AG04450 (cell line): ENCODE measurements at regions of chr3 and their contacts with region 1.

Region 1: DNA sequence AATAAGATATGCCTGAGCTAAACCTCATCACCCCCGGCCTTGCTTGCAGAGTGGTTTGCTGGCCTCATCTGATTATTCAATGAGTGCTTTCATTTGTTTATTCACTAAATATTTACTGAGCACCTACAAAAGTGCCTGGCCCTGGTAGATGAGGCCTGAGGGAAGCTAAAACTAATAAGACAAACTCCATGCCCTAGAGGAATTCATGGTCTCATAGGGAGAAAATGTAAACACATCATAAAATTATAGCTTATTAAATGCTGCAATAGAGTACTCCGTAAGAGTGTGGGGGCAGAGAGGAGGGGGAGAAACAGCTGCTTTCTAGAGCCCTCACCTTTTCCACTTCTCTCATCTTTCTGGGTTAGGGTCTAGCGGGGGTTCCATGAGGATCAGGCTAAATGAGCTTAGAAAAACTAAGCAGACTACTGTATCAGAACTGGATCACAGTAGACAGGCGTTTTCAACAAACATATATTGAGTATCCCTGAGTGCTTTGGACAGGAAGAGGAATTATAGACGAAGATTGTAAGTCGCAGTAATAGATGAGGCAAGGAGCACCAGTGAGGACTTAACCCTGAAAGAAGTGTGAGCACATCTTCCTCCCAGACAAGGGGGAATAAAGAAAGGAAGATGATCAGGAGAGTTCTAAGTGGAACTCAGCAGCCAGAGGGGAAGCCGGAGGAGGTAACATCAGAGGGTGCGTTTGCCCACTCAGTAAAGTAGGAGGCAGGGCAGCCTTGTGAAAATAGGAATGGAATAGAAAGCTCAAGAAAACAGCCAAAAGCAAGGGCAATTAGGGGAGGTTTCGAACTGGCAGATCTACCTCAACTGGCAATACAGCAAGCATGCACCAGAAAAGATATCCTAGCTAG is 31.5 kb upstream of the LAMP3 start:
- DNase-seq: no peak
- H3K4me3 ChIP-seq: no peak overlapping the region
- H3K27ac ChIP-seq: no peak overlapping the region
- H3K27me3 ChIP-seq: no peaks in the 10 kb centered on the region
- CTCF ChIP-seq: no peak

Region 2: GRCh38 chr3:183385698-183386613 is 191.9 kb after region 1 on chr3:
- CTCF ChIA-PET with region 1: interaction called, 432 read pairs
- POLR2A ChIA-PET with region 1: no interaction called
- DNase-seq: peak; percentile 49
- H3K4me3 ChIP-seq: no peak overlapping the region
- H3K27ac ChIP-seq: no peak overlapping the region
- H3K27me3 ChIP-seq: peaks cover 22% of the 10 kb centered on the region
- CTCF ChIP-seq: peak; percentile 75

Region 3: DNA sequence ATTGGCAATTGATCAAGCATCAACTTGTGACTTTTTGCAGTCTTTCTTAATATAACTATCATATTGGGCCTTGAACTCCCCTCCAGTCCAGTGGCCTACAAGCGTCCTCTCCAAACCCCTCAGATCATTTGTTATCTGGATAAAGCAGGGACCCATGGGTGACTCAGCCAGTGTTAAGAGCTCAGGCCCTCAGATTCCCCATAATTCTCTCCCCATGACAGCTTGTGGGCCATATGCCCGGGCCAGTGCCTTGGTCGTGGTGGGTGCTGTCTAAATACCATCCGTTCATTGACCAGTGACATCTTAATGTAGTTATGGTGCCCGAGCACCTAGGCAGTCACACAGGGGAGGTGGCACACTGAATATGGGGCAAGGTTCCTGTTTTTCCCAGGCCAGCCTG is 216.2 kb after region 1 on chr3:
- CTCF ChIA-PET with region 1: no interaction called
- POLR2A ChIA-PET with region 1: no interaction called
- DNase-seq: no peak
- H3K4me3 ChIP-seq: no peak overlapping the region
- H3K27ac ChIP-seq: no peak overlapping the region
- H3K27me3 ChIP-seq: peaks cover 19% of the 10 kb centered on the region
- CTCF ChIP-seq: no peak